Transverse colon (tissue), 4 donors: ENCODE measurements at regions of chr2 and their contacts with region 1.

Region 1: GRCh38 chr2:5491523-5491922 is 200.7 kb upstream of the SOX11 start:
- DNase-seq: no peak
- H3K4me3 ChIP-seq: no peak overlapping the region
- H3K27ac ChIP-seq: no peak overlapping the region
- H3K4me1 ChIP-seq: no peaks in the 10 kb centered on the region
- H3K27me3 ChIP-seq: no peaks in the 10 kb centered on the region
- CTCF ChIP-seq: no peak
- EP300 ChIP-seq: no peak
- POLR2A ChIP-seq: no peak

Region 2: GRCh38 chr2:5433855-5434254 is 57.7 kb before region 1 on chr2:
- in situ Hi-C with region 1: no loop called
- intact Hi-C with region 1: loop called (anchors 2 kb)
- DNase-seq: no peak
- H3K4me3 ChIP-seq: no peak overlapping the region
- H3K27ac ChIP-seq: no peak overlapping the region
- H3K4me1 ChIP-seq: no peaks in the 10 kb centered on the region
- H3K27me3 ChIP-seq: no peaks in the 10 kb centered on the region
- CTCF ChIP-seq: no peak
- EP300 ChIP-seq: no peak
- POLR2A ChIP-seq: no peak